ENCODE measurements at regions of chr13 and their contacts with region 1.

Region 1: DNA sequence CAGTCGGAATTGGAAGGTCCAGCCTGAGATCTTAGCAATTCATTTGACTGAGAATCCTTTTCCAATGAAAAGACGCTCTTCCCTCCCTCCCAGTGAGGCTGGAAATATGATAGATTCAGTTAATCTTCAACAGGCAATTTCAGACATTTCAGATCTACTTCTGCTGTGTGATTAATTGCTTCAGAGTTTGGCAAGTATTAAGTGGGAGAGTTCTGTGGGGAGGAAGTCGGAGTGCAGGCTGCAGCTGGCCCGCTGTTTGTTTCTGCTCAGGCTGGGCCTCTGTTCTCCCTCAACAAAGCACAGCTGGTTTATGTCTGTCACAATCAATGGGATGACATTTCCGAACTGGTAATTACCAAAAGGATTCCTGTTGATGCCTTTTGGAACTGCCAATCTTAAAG is 178.2 kb downstream of the NDFIP2 start:
- DNase-seq: peak; percentile 58 to 77
- ATAC-seq: peak; percentile 91 to 94
- H3K4me3 ChIP-seq: no peak overlapping the region
- H3K27ac ChIP-seq: peak overlapping the region; percentile 74 to 90 (median 83)
- H3K4me1 ChIP-seq: peaks cover 49 to 51% of the 10 kb centered on the region in 2 donors
- H3K27me3 ChIP-seq: no peaks in the 10 kb centered on the region
- CTCF ChIP-seq: no peak
- POLR2A ChIP-seq: no peak

Region 2: DNA sequence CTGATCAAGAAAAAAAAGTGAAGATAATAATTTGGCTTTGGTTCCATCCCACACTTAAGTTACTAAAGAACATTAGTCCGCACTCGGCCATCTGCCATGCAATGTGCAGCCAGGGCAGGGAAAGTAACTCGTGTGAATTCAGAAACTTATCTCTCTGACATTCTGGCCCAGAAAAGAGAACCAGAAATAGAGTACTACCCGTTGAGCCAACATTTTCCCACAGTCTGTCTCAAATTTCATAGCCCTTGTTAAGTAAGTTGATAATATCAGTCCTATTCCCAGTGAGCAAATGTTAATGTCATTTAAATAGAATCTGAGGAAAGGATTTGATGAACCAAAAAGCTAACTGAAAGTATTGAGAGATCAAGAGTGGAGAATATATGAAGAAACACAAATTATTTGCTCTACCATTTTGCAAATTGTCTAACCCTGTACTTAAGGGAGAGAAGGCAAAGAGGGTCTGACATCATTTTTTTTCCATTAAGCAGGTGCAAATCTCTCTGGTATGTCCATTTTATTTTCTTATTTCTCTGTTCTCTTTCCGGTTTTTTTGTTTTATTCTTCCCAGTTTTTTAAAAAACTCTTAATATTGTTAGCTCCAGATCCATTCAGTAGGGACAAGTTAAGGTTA is 21.9 kb before region 1 on chr13:
- in situ Hi-C with region 1: no loop called
- intact Hi-C with region 1: loop called (anchors 2 kb)
- DNase-seq: peak; percentile 69 to 80
- ATAC-seq: peak; percentile 99 to 100
- H3K4me3 ChIP-seq: peak overlapping the region in 2 of 4 donors; percentile 20 to 27
- H3K27ac ChIP-seq: peak overlapping the region; percentile 9 to 83 (median 73)
- H3K4me1 ChIP-seq: peaks cover 16 to 31% of the 10 kb centered on the region in 2 donors
- H3K27me3 ChIP-seq: no peaks in the 10 kb centered on the region
- CTCF ChIP-seq: no peak
- POLR2A ChIP-seq: no peak